Endothelial cell of umbilical vein (primary cell): ENCODE measurements at regions of chr6 and their contacts with region 1.

Region 1: GRCh38 chr6:167907837-167908681 is 81.3 kb downstream of the AFDN start:
- DNase-seq: peak; percentile 15
- H3K4me3 ChIP-seq: no peak overlapping the region
- H3K27ac ChIP-seq: no peak overlapping the region
- H3K4me1 ChIP-seq: peaks cover 5% of the 10 kb centered on the region
- H3K27me3 ChIP-seq: no peaks in the 10 kb centered on the region
- CTCF ChIP-seq: peak; percentile 15 to 22
- POLR2A ChIP-seq: no peak

Region 2: DNA sequence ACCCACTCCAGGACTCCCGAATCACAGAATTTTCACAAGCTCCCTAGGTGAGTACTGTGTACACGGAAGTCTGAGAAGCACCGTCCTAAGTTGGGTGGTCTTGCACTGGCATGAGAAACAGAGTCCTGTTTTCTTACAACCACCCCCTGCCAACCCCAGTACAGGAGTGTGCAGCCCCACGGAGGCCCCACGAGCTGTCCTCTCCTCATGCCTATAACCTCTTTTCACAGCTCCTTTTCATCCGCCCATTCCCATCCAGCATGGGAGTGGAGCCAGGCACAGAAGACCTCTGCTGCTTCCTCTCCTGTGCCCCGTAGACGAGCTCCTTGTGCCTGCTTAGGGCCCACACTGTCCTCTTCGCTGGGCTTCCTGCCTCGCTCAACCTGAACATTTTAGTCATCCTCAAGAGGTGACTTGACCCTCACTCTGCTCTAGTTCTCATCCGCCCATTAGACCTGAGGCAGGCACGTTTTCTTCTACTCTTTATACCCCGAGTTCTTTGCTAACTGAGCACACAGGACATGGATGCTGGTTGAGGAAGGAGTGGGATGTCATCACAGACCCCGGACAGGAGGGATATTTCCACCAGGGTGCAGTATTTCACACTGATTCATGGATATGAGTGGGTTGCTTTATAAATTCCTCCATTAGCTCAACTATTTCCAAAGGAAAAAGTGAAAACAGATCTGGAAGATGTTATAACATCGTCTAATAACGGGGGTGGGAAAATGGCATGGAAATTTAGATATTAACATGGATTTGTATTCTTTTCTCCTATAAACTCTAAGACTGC is 422.7 kb before region 1 on chr6:
- CTCF ChIA-PET with region 1: interaction called, 20 read pairs
- POLR2A ChIA-PET with region 1: no interaction called
- dilution Hi-C with region 1: no loop called
- intact Hi-C with region 1: no loop called
- DNase-seq: peak; percentile 55
- H3K4me3 ChIP-seq: no peak overlapping the region
- H3K27ac ChIP-seq: no peak overlapping the region
- H3K4me1 ChIP-seq: peaks cover 3% of the 10 kb centered on the region
- H3K27me3 ChIP-seq: peaks cover 0 to 2% of the 10 kb centered on the region in 2 experiments
- CTCF ChIP-seq: peak; percentile 45 to 52
- POLR2A ChIP-seq: no peak

Region 3: GRCh38 chr6:167722634-167723309 is 185.3 kb before region 1 on chr6:
- CTCF ChIA-PET with region 1: no interaction called
- POLR2A ChIA-PET with region 1: no interaction called
- dilution Hi-C with region 1: no loop called
- intact Hi-C with region 1: no loop called
- DNase-seq: no peak
- H3K4me3 ChIP-seq: no peak overlapping the region
- H3K27ac ChIP-seq: no peak overlapping the region
- H3K4me1 ChIP-seq: no peaks in the 10 kb centered on the region
- H3K27me3 ChIP-seq: no peaks in the 10 kb centered on the region
- CTCF ChIP-seq: no peak
- POLR2A ChIP-seq: no peak

Region 4: GRCh38 chr6:168035098-168035660 is 127.1 kb after region 1 on chr6:
- CTCF ChIA-PET with region 1: no interaction called
- POLR2A ChIA-PET with region 1: no interaction called
- dilution Hi-C with region 1: no loop called
- intact Hi-C with region 1: loop called (anchors 5 kb)
- DNase-seq: peak; percentile 36
- H3K4me3 ChIP-seq: peak overlapping the region in 2 of 3 experiments; percentile 10 to 27
- H3K27ac ChIP-seq: peak overlapping the region; percentile 50
- H3K4me1 ChIP-seq: peaks cover 25% of the 10 kb centered on the region
- H3K27me3 ChIP-seq: no peaks in the 10 kb centered on the region
- CTCF ChIP-seq: no peak
- POLR2A ChIP-seq: no peak

Region 5: GRCh38 chr6:168050881-168051586 is 143.0 kb after region 1 on chr6:
- CTCF ChIA-PET with region 1: no interaction called
- POLR2A ChIA-PET with region 1: no interaction called
- dilution Hi-C with region 1: no loop called
- intact Hi-C with region 1: loop called (anchors 1 kb)
- DNase-seq: no peak
- H3K4me3 ChIP-seq: no peak overlapping the region
- H3K27ac ChIP-seq: no peak overlapping the region
- H3K4me1 ChIP-seq: no peaks in the 10 kb centered on the region
- H3K27me3 ChIP-seq: no peaks in the 10 kb centered on the region
- CTCF ChIP-seq: peak; percentile 21 to 41
- POLR2A ChIP-seq: no peak

Region 6: GRCh38 chr6:168132531-168133167 is 224.6 kb after region 1 on chr6:
- CTCF ChIA-PET with region 1: interaction called, 4 read pairs
- POLR2A ChIA-PET with region 1: no interaction called
- dilution Hi-C with region 1: no loop called
- intact Hi-C with region 1: loop called (anchors 2 kb)
- DNase-seq: peak; percentile 25
- H3K4me3 ChIP-seq: no peak overlapping the region
- H3K27ac ChIP-seq: no peak overlapping the region
- H3K4me1 ChIP-seq: no peaks in the 10 kb centered on the region
- H3K27me3 ChIP-seq: no peaks in the 10 kb centered on the region
- CTCF ChIP-seq: peak; percentile 16 to 42
- POLR2A ChIP-seq: no peak

Region 7: DNA sequence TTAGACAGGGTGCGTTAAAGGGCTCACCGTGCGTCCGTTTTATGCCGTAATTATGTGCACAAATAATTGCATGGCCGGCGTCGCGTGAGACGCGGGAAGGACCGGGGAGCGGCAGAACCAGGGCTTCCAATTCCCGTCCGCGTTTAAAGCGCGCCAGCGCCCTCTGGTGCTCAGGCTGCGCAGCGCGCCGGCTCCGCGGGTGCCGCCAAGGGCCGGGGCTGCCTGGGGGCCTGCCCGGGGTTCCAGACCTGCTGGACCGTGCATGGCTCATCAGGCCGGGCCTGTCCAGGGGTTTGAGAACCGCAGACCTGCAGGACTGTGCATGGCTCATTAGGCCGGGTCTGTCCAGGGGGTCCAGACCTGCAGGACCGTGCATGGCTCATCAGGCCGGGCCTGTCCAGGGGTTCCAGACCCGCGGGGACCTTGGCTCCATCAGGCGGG is 976.6 kb after region 1 on chr6:
- CTCF ChIA-PET with region 1: no interaction called
- POLR2A ChIA-PET with region 1: no interaction called
- dilution Hi-C with region 1: no loop called
- intact Hi-C with region 1: loop called (anchors 5 kb)
- DNase-seq: peak; percentile 4
- H3K4me3 ChIP-seq: no peak overlapping the region
- H3K27ac ChIP-seq: no peak overlapping the region
- H3K4me1 ChIP-seq: no peaks in the 10 kb centered on the region
- H3K27me3 ChIP-seq: no peaks in the 10 kb centered on the region
- CTCF ChIP-seq: peak; percentile 77 to 85
- POLR2A ChIP-seq: no peak